PC-9 (cell line): ENCODE measurements at regions of chr4 and their contacts with region 1.

Region 1: DNA sequence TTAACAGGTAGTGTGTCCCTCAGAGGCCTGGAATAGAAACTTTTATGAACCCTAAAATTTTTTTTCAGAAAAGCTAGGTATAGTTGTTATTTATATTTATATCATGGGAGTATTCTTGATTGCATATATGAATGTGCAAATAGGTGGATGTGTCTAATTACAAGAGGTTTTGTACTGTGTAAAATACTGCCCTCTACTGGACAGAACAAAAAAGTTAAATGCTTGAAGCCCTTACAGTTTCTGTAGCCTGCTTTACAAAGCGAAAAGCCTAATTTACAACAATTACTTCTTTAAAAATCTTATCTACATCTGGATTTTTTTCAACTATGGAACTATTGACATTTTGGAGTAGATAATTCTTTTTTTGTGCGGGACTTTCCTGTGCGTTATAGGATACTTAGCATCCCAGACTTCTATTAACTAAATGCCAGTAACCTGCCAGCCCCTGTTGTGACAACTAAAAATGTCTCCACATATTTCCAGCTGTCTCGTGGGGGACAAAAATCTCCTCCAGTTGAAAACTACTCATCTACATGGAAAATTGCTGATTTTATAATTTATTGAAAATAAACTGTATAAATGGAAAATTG is 35.1 kb downstream of the ENPEP start:
- DNase-seq: no peak
- H3K4me3 ChIP-seq: no peak overlapping the region
- H3K27ac ChIP-seq: no peak overlapping the region
- H3K4me1 ChIP-seq: no peaks in the 10 kb centered on the region
- H3K27me3 ChIP-seq: no peaks in the 10 kb centered on the region
- CTCF ChIP-seq: peak; percentile 75

Region 2: GRCh38 chr4:110049951-110050925 is 460.8 kb before region 1 on chr4:
- CTCF ChIA-PET with region 1: interaction called, 5 read pairs
- POLR2A ChIA-PET with region 1: no interaction called
- intact Hi-C with region 1: loop called (anchors 2 kb)
- DNase-seq: peak in 1 of 2 experiments; percentile 27
- H3K4me3 ChIP-seq: no peak overlapping the region
- H3K27ac ChIP-seq: no peak overlapping the region
- H3K4me1 ChIP-seq: no peaks in the 10 kb centered on the region
- H3K27me3 ChIP-seq: no peaks in the 10 kb centered on the region
- CTCF ChIP-seq: peak; percentile 80

Region 3: DNA sequence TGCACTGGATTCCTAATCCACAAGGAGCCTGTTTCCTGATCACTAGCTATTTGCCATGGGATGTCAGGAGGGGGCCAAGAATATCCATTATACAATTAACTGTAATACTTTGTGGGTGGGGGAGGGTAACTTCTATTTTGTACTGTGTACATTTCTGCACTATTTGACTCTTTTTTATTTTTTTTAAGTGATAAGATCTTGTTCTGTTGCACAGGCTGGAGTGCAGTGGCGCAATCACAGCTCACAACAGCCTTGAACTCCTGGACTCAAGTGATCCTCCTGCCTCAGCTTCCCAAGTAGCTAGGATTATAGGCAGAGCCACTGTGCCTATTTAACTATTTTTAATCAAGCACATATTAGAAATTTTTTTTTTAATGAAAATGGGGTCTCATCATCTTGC is 446.8 kb before region 1 on chr4:
- CTCF ChIA-PET with region 1: interaction called, 15 read pairs
- POLR2A ChIA-PET with region 1: no interaction called
- intact Hi-C with region 1: no loop called
- DNase-seq: no peak
- H3K4me3 ChIP-seq: no peak overlapping the region
- H3K27ac ChIP-seq: no peak overlapping the region
- H3K4me1 ChIP-seq: peaks cover 19% of the 10 kb centered on the region
- H3K27me3 ChIP-seq: no peaks in the 10 kb centered on the region
- CTCF ChIP-seq: no peak

Region 4: DNA sequence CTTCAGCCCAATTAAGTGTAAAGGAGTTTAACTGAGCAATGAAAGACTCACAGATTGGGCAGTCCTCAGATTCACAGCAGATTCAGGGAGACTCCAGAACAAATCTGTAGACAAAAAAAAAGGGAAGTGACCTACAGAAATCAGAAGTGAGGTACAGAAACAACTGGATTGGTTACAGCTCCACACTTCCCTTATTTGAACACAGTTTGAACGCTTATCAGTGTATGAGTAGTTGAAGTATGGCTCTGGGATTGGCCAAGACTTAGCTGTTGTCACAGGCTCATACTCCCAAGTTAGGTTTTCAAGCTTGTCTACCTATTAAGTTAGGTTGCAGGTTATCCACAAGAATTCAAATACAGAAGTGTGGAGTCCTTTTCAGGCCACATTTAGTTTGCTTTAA is 200.3 kb before region 1 on chr4:
- CTCF ChIA-PET with region 1: interaction called, 4 read pairs
- POLR2A ChIA-PET with region 1: no interaction called
- intact Hi-C with region 1: loop called (anchors 1 kb)
- DNase-seq: no peak
- H3K4me3 ChIP-seq: no peak overlapping the region
- H3K27ac ChIP-seq: no peak overlapping the region
- H3K4me1 ChIP-seq: no peaks in the 10 kb centered on the region
- H3K27me3 ChIP-seq: no peaks in the 10 kb centered on the region
- CTCF ChIP-seq: no peak